ENCODE measurements at regions of chr14 and their contacts with region 1.

Region 1: DNA sequence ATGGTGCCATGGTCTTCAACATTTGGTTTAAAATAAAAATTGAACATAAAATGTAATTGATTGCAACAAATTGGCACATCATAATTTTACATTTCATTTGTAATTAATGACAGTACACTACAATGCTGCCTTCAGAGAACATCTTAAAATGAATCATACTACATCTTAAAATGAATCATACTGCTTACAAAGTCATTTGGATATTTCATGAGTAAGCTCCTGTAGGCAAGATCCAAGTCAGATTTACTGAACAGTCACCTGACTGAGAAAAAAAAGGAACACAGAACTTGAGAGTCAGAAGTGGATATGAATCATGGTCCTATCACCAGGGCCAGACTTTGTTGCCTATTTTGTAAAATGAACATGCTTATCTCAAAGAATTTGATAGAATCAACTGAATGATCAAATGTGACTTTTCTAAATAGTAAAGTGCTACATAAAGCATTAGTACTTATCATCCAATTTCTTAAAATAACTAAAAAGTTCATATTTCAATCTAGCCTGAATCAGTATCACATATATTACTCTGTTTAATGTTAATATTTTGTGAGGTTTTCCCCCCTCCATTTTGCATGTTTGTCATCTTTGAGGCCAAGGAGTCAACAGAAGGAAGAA is 32.7 kb upstream of the FBLN5 start:
- DNase-seq: no peak
- H3K4me3 Mint-ChIP-seq: no peak overlapping the region
- H3K27ac Mint-ChIP-seq: peak overlapping the region; percentile 42
- H3K4me1 Mint-ChIP-seq: peaks cover 28% of the 10 kb centered on the region
- H3K27me3 Mint-ChIP-seq: no peaks in the 10 kb centered on the region

Region 2: DNA sequence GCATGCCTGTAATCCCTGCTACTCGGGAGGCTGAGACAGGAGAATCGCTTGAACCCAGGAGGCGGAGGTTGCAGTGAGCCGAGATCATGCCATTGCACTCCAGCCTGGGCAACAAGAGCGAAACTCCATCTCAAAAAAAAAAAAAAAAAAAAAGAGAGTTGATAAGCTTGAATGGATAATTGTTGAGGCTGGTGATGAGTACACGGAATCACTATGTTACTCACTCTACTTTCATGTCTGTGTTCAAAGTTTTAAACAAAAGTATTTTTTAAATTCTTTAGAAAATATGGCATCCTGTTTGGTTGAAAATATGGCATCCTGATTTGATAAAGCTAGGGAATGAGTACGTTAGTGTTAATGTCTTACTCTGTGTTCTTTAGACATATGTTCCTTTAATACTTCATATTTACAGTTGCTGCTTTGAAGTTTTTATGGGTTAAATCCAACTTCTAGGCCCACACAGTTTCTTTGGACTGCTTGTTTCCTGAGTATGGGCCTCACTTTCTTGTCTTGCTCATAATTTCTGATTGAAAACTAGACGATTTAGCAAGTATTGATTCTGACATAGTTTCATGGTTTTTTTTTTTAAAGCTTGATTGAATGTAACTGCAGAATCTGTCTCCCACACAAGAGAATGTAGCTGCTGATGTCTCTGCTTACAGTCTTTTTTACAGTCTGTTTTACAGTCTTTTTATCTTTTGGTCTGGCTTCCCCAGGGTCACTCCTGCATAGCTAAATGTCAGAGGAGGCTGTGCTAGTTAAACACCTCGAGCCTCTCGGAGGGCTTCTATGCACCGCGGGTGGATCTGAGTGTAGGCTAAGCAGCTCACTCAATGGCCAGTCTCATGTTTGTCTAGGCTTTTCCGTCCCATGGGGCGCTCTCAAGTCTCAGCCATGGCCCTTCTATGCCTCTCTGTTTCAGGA is 18.7 kb before region 1 on chr14:
- intact Hi-C with region 1: loop called (anchors 1 kb)
- DNase-seq: no peak
- H3K4me3 Mint-ChIP-seq: no peak overlapping the region
- H3K27ac Mint-ChIP-seq: peak overlapping the region; percentile 54
- H3K4me1 Mint-ChIP-seq: no peaks in the 10 kb centered on the region
- H3K27me3 Mint-ChIP-seq: no peaks in the 10 kb centered on the region

Region 3: GRCh38 chr14:91996948-91997371 is 16.7 kb after region 1 on chr14:
- intact Hi-C with region 1: loop called (anchors 1 kb)
- DNase-seq: no peak
- H3K4me3 Mint-ChIP-seq: no peak overlapping the region
- H3K27ac Mint-ChIP-seq: no peak overlapping the region
- H3K4me1 Mint-ChIP-seq: peaks cover 33% of the 10 kb centered on the region
- H3K27me3 Mint-ChIP-seq: no peaks in the 10 kb centered on the region

Region 4: GRCh38 chr14:92039719-92040430 is 59.6 kb after region 1 on chr14 and contains the start of gene TRIP11:
- intact Hi-C with region 1: loop called (anchors 1 kb)
- DNase-seq: peak; percentile 94
- H3K4me3 Mint-ChIP-seq: peak within 1 kb of the TSS; percentile 93
- H3K27ac Mint-ChIP-seq: peak within 1 kb of the TSS; percentile 98
- H3K4me1 Mint-ChIP-seq: peaks cover 38% of the 10 kb centered on the region
- H3K27me3 Mint-ChIP-seq: no peaks in the 10 kb centered on the region
- total RNA-seq, gene TRIP11: 36.5 and 44.4 TPM in 2 replicates

Region 5: DNA sequence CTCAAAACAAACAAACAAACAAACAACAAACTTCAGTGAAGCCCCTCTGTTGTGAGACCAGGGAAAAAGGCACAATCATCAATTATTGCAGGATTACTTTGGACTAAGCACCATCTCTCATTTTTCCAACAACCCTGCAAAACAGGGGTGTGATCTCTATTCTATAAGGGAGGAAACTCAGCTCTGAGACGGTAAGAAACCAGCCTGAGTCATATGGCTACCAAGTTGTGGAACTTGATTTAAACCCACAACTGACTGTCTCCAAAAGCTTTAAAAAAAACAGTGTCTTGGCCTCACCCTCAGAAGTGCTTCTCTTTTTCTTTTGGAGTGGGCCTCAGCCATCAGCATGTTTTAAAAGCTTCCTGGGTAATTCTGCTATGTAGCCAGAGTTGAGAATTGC is 583.1 kb after region 1 on chr14:
- intact Hi-C with region 1: loop called (anchors 5 kb)
- DNase-seq: peak; percentile 38
- H3K4me3 Mint-ChIP-seq: no peak overlapping the region
- H3K27ac Mint-ChIP-seq: peak overlapping the region; percentile 10
- H3K4me1 Mint-ChIP-seq: peaks cover 73% of the 10 kb centered on the region
- H3K27me3 Mint-ChIP-seq: no peaks in the 10 kb centered on the region